SK-N-SH (cell line): ENCODE measurements at regions of chr2 and their contacts with region 1.

Region 1: DNA sequence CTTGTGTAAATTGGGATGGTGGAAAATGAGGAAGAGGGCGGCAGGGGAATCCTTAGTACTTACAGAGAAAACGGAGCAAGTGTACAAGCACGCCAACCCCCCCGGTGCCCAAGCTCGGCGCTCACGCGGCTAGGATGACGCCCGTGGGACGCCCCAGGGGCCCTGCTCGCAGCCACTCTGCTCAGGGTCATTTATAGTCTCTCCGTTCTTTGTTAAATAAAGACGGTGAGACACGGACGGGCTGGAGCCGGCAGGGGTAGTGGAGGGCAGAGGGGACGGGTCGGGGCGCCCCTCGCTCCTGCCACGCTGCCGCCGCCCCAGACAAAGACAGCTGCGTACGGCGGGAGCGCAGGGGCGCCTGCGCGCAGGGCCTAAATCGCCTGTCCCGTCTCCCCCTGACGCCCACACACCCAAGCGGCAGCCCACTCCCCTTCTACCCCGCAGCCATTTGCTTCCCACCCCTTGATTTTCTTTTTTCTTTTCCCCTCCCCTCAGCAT is 37.8 kb downstream of the PCBP1 start:
- DNase-seq: peak; percentile 89
- H3K4me3 ChIP-seq: peak overlapping the region; percentile 53 to 60
- H3K27ac ChIP-seq: peak overlapping the region; percentile 85 to 88
- H3K4me1 ChIP-seq: peaks cover 7 to 9% of the 10 kb centered on the region in 2 experiments; a peak in 1 of 4 replicates
- H3K27me3 ChIP-seq: no peaks in the 10 kb centered on the region
- CTCF ChIP-seq: no peak
- EP300 ChIP-seq: no peak
- RAD21 ChIP-seq: no peak

Region 2: GRCh38 chr2:70086838-70087701 is 38.0 kb before region 1 on chr2 and contains the start of gene PCBP1:
- CTCF ChIA-PET with region 1: interaction called, 8 read pairs
- POLR2A ChIA-PET with region 1: interaction called, 36 read pairs
- DNase-seq: peak; percentile 99
- H3K4me3 ChIP-seq: peak within 1 kb of the TSS; percentile 85 to 97
- H3K27ac ChIP-seq: peak within 1 kb of the TSS; percentile 100
- H3K4me1 ChIP-seq: peaks cover 21 to 29% of the 10 kb centered on the region in 2 experiments; a peak in 3 of 4 replicates
- H3K27me3 ChIP-seq: no peaks in the 10 kb centered on the region
- CTCF ChIP-seq: no peak
- EP300 ChIP-seq: no peak
- RAD21 ChIP-seq: no peak
- polyA plus RNA-seq, gene PCBP1: 60.7 and 94.0 TPM in 2 replicates

Region 3: DNA sequence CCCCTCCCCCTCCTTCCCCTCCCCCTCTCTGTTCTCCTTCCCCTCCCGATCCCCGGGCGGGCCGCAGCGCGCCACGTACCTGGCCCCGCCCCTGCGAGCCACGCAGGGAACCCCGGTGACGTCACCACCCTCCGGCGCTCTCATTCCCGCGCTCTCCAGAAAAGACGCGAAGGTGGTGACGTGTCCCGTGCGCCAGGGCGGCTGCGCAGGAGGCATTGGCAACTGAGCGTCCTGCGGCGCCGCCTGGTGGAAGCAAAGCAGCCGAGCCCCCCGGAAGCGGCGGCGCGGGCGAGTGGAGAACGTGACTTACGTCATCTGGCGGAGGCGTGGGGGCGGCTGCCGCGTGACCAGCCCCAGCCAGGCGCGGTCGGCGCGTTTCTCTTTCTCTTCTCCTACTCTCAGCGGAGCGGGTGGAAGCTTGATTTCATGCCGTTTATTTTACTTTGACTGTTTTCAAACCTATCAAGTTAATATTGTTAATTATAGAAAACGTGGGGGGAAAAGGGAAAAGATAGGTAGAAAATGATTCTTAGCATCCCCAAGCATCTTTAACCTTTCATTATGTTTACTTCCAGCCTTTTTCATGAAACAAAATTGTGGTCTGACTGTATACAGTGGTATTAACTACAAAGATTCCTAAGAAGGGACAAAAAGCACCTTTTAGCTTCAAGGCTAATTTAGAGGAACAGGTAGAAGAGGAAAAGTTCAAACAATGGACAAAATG is 17.7 kb after region 1 on chr2:
- CTCF ChIA-PET with region 1: interaction called, 26 read pairs
- POLR2A ChIA-PET with region 1: interaction called, 31 read pairs
- DNase-seq: peak; percentile 99
- H3K4me3 ChIP-seq: peak overlapping the region; percentile 56 to 67
- H3K27ac ChIP-seq: peak overlapping the region; percentile 92 to 96
- H3K4me1 ChIP-seq: peaks cover 13 to 20% of the 10 kb centered on the region in 2 experiments; a peak in 3 of 4 replicates
- H3K27me3 ChIP-seq: no peaks in the 10 kb centered on the region
- CTCF ChIP-seq: peak; percentile 84
- EP300 ChIP-seq: peak in 1 of 2 experiments; percentile 91; a peak in 2 of 4 replicates
- RAD21 ChIP-seq: peak; percentile 86